A549 (cell line): ENCODE measurements at regions of chr1 and their contacts with region 1.

Region 1: GRCh38 chr1:160006312-160006940 is 25.4 kb downstream of the PIGM start:
- DNase-seq: peak; percentile 80 to 87
- ATAC-seq: peak; percentile 93 to 96
- H3K4me3 ChIP-seq: no peak overlapping the region
- H3K27ac ChIP-seq: no peak overlapping the region
- H3K4me1 ChIP-seq: no peaks in the 10 kb centered on the region
- CTCF ChIP-seq: peak; percentile 94
- EP300 ChIP-seq: no peak
- POLR2A ChIP-seq: no peak
- RAD21 ChIP-seq: peak; percentile 71 to 78

Region 2: DNA sequence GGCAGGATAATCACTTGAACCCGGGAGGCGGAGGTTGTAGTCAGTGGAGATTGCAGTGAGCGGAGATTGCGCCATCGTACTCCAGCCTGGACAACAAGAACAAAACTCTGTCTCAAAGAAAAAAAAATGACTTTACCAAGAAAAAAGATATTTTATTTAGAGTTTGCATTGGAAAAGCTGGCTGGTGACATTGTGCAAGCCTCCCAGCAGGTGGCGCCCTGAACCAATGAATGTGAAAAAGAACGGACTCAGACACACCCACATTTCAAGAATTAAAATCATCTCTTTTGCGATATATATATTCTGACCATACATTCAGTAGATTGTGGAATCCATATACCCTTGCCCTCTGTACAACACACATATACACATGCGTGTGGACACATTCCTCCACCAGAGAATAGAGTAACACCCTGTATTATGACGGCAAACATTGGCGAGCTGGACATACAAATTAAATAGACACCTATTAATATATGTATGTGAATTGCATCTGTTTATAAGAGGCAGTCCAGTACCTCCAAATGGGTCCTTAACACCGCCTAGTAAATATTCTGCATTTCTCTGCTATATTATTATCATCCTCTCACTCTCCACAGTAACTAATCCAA is 874.0 kb before region 1 on chr1:
- CTCF ChIA-PET with region 1: interaction called, 11 read pairs
- POLR2A ChIA-PET with region 1: no interaction called
- DNase-seq: peak; percentile 59 to 61
- ATAC-seq: peak; percentile 68 to 81; a peak in 3 of 6 replicates
- H3K4me3 ChIP-seq: no peak overlapping the region
- H3K27ac ChIP-seq: no peak overlapping the region
- H3K4me1 ChIP-seq: no peaks in the 10 kb centered on the region
- CTCF ChIP-seq: peak; percentile 88
- EP300 ChIP-seq: no peak
- POLR2A ChIP-seq: no peak
- RAD21 ChIP-seq: peak; percentile 84 to 85

Region 3: DNA sequence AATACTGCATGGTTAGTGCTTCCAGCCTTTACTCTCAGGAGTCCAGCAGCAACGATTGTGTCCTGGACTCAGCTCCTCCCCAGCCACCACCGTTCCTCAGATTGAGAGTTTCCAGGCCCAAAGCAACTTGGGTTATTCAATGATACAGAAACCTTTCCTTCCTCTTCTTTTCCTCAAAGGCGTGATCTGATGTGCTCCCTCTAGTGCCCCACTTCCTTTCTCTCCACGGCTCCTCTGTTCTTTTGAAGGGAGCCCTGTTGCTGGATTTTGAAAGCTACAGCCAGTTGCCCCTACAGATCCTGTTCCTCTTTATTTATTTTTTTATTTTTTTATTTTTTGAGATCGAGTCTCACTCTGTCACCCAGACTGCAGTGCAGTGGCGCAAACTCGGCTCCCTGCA is 306.1 kb before region 1 on chr1:
- CTCF ChIA-PET with region 1: no interaction called
- POLR2A ChIA-PET with region 1: no interaction called
- DNase-seq: no peak
- ATAC-seq: no peak
- H3K4me3 ChIP-seq: no peak overlapping the region
- H3K27ac ChIP-seq: no peak overlapping the region
- H3K4me1 ChIP-seq: no peaks in the 10 kb centered on the region
- CTCF ChIP-seq: no peak
- EP300 ChIP-seq: no peak
- POLR2A ChIP-seq: no peak
- RAD21 ChIP-seq: no peak

Region 4: GRCh38 chr1:159752135-159752580 is 254.3 kb before region 1 on chr1:
- CTCF ChIA-PET with region 1: no interaction called
- POLR2A ChIA-PET with region 1: no interaction called
- DNase-seq: peak in 1 of 2 experiments; percentile 76
- ATAC-seq: peak; percentile 25 to 79; a peak in 3 of 6 replicates
- H3K4me3 ChIP-seq: no peak overlapping the region
- H3K27ac ChIP-seq: peak overlapping the region; percentile 63 to 67; a peak in 5 of 6 replicates
- H3K4me1 ChIP-seq: peaks cover 11% of the 10 kb centered on the region
- CTCF ChIP-seq: no peak
- EP300 ChIP-seq: peak; percentile 32 to 78; a peak in 3 of 5 replicates
- POLR2A ChIP-seq: no peak
- RAD21 ChIP-seq: no peak; a peak in 1 of 5 replicates

Region 5: GRCh38 chr1:159775716-159776115 is 230.7 kb before region 1 on chr1:
- CTCF ChIA-PET with region 1: interaction called, 16 read pairs
- POLR2A ChIA-PET with region 1: interaction called, 3 read pairs
- DNase-seq: no peak
- ATAC-seq: no peak
- H3K4me3 ChIP-seq: no peak overlapping the region
- H3K27ac ChIP-seq: no peak overlapping the region
- H3K4me1 ChIP-seq: peaks cover 6% of the 10 kb centered on the region; the same call in 2 of the 3 replicates
- CTCF ChIP-seq: peak; percentile 41; the same call in 2 of the 3 replicates
- EP300 ChIP-seq: no peak
- POLR2A ChIP-seq: no peak
- RAD21 ChIP-seq: peak; percentile 51 to 60

Region 6: DNA sequence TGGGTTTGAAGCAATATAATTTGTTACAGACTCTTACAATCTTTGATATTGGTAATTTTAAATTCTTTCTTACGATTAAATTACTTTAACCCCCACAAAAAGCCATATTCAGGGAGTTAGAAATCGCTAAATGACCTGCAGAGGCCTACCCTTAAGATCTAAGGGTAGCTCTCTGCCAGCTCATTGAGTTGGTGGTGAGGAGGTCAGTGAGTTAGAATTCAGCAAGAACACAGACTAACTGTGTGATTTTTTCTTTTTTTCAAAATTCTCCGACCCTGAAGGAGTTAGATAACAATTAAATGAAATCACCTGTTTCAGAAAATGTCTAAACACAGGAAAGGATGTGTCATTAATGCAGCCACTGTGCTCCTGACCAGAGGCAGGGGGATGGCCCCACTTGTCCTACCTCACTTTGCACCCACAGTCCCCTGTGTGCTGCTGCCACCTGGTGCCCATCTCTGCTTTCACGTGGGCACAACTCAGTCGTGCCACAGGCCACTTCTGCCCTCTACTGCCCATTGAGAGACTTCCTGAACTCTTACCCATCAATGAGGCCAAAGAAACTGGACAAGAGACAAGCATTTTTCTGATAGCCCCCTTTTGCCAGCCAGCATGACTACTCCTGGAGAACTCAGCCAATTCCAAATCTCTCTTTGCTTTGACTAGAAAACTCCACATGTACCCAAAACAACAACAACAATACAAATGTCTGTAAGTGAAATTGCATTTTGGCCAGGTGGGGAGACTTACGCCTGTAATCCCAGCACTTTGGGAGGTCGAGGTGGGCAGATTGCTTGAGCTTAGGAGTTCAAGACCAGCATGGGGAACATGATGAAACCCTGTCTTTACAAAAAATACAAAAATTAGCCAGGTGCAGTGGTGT is 114.9 kb before region 1 on chr1:
- CTCF ChIA-PET with region 1: interaction called, 202 read pairs
- POLR2A ChIA-PET with region 1: interaction called, 7 read pairs
- DNase-seq: peak; percentile 82 to 90
- ATAC-seq: peak; percentile 95 to 99
- H3K4me3 ChIP-seq: no peak overlapping the region
- H3K27ac ChIP-seq: peak overlapping the region in 1 of 2 experiments; percentile 54; a peak in 1 of 6 replicates
- H3K4me1 ChIP-seq: peaks cover 11% of the 10 kb centered on the region; the same call in 2 of the 3 replicates
- CTCF ChIP-seq: peak; percentile 100
- EP300 ChIP-seq: no peak
- POLR2A ChIP-seq: no peak
- RAD21 ChIP-seq: peak; percentile 100

Region 7: GRCh38 chr1:159960721-159961381 is 45.6 kb before region 1 on chr1:
- CTCF ChIA-PET with region 1: interaction called, 124 read pairs
- POLR2A ChIA-PET with region 1: no interaction called
- DNase-seq: peak in 1 of 2 experiments; percentile 62
- ATAC-seq: peak; percentile 50 to 78; a peak in 5 of 6 replicates
- H3K4me3 ChIP-seq: no peak overlapping the region
- H3K27ac ChIP-seq: 0 out of 6 replicates have a peak overlapping the region, but pooled peaks of 1 of the 2 experiments have one; percentile 21
- H3K4me1 ChIP-seq: no peaks in the 10 kb centered on the region
- CTCF ChIP-seq: no peak
- EP300 ChIP-seq: no peak
- POLR2A ChIP-seq: no peak
- RAD21 ChIP-seq: no peak

Region 8: DNA sequence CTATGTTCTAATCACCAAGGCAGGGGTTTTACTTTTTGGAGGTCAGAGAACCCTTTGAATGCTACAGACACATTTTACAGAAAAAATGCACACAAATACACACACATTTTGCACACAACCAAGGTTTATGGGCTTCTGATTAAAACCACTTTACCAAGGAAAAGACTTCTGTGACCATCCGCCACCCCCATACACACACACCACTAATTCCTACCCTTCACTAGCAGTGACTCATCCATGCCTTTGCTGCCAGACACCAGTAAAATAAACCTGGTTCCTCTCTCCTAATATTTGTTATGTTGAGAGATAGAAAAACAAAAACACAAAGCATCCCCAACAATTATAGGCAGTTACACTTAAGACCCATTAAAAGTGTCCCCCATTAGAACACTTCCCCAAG is 12.5 kb after region 1 on chr1:
- CTCF ChIA-PET with region 1: interaction called, 166 read pairs
- POLR2A ChIA-PET with region 1: no interaction called
- DNase-seq: no peak
- ATAC-seq: peak in 1 of 2 experiments; percentile 51; a peak in 1 of 6 replicates
- H3K4me3 ChIP-seq: no peak overlapping the region
- H3K27ac ChIP-seq: no peak overlapping the region
- H3K4me1 ChIP-seq: peaks cover 17% of the 10 kb centered on the region; the same call in 2 of the 3 replicates
- CTCF ChIP-seq: no peak
- EP300 ChIP-seq: no peak
- POLR2A ChIP-seq: no peak
- RAD21 ChIP-seq: no peak

Region 9: DNA sequence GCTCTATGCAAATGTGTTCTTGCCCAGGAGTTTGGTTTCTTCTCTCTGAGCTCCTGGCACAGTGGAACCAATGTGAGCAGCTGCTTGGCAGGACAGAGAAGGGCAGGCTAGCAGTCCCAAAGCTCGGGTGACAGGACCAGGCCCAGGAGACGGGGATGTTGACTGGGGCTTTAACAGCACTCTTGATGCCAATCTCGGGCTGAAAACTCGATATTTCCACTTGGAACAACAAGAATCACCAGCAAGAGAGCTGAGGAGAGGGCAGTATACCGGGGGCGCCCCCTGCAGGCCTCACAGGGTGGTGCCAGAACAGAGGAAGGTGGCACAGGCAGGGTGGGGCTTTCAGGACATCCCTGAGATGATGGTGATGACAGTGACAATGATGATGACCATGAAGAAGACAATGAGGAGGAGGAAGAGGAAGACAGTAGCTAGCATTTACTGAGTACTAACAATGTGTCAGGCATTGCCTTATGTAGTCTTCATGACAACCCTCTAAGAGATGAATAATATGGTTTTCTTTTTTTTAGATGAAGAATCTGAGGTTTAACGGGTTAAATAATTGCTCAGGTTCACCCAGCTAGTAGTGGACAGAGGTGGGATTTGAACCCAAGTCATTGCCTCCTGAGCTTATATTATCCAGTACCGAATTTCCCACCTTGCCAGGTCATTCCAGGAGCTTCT is 72.2 kb after region 1 on chr1:
- CTCF ChIA-PET with region 1: interaction called, 11 read pairs
- POLR2A ChIA-PET with region 1: no interaction called
- DNase-seq: peak; percentile 42 to 51
- ATAC-seq: peak; percentile 51 to 88; a peak in 4 of 6 replicates
- H3K4me3 ChIP-seq: no peak overlapping the region
- H3K27ac ChIP-seq: no peak overlapping the region
- H3K4me1 ChIP-seq: no peaks in the 10 kb centered on the region
- CTCF ChIP-seq: peak; percentile 54
- EP300 ChIP-seq: no peak
- POLR2A ChIP-seq: no peak
- RAD21 ChIP-seq: peak; percentile 44 to 49

Region 10: GRCh38 chr1:160177231-160177630 is 170.8 kb after region 1 on chr1:
- CTCF ChIA-PET with region 1: no interaction called
- POLR2A ChIA-PET with region 1: no interaction called
- DNase-seq: no peak
- ATAC-seq: no peak
- H3K4me3 ChIP-seq: no peak overlapping the region
- H3K27ac ChIP-seq: no peak overlapping the region
- H3K4me1 ChIP-seq: no peaks in the 10 kb centered on the region
- CTCF ChIP-seq: no peak
- EP300 ChIP-seq: no peak
- POLR2A ChIP-seq: no peak
- RAD21 ChIP-seq: no peak